ENCODE measurements at regions of chr2 and their contacts with region 1.

Region 1: DNA sequence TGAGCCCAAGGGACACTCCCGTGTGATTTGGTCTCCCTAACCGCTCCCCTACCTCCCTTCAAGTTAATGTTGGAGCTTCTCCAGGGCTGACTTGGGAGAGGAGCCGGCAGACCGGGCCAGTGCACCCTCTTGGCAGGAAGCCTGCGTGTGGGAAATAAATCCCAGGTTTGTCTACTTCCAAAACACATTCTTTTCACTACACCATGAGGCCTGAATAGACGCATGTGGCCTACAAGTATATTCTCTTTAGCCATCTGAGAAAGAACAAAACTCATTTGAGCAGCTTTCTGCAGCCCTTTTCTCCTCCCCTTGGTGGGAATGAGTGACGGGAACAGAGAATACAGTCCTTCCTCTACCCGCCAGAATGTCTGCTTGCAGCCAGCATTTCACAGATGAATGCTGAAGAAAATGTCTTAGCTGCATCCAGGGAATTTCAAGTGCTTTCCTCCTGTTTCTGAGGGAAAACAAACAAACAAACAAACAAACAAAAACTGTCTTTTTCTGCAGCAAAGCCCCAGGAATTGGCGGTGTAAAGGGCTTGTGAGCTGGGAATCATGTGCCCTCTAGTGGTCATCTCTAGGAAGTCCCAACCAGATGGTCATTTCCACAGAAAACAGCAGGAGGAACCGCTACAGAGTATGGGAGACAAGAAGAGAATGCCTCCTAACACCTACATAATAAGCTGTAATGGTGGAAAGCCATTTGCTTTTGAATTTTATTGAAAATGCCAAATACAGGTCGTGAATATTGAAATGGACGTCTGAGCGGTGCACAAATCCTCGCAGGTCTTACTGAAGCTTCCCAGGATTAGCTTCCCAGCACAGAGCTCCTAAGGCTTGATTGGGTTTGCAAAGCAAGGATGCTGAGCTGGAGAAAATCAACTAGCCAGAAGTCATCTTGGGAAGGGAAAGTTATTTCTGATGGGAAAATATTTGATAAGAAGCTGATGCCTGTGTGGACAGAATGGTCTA is 41.2 kb upstream of the DAPL1 start:
- DNase-seq: peak; percentile 70
- H3K4me3 Mint-ChIP-seq: no peak overlapping the region
- H3K27ac Mint-ChIP-seq: no peak overlapping the region
- H3K4me1 Mint-ChIP-seq: no peaks in the 10 kb centered on the region
- H3K27me3 Mint-ChIP-seq: peaks cover 29% of the 10 kb centered on the region
- CTCF ChIP-seq: peak; percentile 69

Region 2: DNA sequence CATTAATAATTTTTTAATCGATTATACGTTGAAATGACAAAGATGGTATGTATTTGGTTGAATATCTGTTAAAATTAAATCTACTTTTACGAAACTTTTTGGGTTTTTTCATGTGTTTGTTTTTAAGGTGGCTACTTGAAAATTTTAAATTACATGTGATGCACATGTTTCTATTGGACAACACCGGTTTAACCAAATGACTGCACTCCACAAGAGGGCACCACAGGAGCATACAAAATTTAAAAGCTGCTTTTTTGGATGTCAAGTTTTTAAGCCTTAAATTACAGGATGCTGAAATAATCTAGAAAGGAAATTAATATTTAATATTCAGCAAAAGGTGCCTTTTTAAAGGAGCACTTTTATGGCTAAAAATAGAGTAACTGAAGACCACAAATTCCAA is 976.5 kb before region 1 on chr2:
- CTCF ChIA-PET with region 1: interaction called, 7 read pairs
- POLR2A ChIA-PET with region 1: no interaction called
- intact Hi-C with region 1: loop called (anchors 10 kb)
- DNase-seq: peak; percentile 58
- H3K4me3 Mint-ChIP-seq: no peak overlapping the region
- H3K27ac Mint-ChIP-seq: no peak overlapping the region
- H3K4me1 Mint-ChIP-seq: no peaks in the 10 kb centered on the region
- H3K27me3 Mint-ChIP-seq: no peaks in the 10 kb centered on the region
- CTCF ChIP-seq: peak; percentile 54

Region 3: DNA sequence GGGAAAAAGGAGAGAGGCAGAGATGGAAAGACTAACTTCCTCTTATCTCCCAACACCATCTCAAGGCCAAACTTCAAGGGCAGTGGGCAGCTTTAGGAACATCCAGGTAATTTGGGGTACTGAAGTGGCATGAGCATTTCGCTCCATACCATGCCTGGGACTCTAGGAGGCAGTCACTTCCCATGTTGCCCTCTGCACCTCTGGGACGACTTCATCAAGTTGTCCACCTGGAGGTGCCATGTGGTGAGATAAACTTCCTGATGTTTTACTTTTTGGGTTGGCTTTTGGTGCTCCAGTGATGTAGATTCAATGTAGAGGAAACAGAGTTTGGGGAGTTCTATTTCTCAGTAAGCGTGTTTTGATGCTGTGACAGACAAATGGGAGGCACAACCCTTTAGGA is 708.6 kb before region 1 on chr2:
- CTCF ChIA-PET with region 1: interaction called, 22 read pairs
- POLR2A ChIA-PET with region 1: no interaction called
- intact Hi-C with region 1: no loop called
- DNase-seq: peak; percentile 15
- H3K4me3 Mint-ChIP-seq: no peak overlapping the region
- H3K27ac Mint-ChIP-seq: no peak overlapping the region
- H3K4me1 Mint-ChIP-seq: no peaks in the 10 kb centered on the region
- H3K27me3 Mint-ChIP-seq: no peaks in the 10 kb centered on the region
- CTCF ChIP-seq: no peak

Region 4: GRCh38 chr2:158456309-158457066 is 297.4 kb before region 1 on chr2 and contains the starts of genes CCDC148 and PKP4:
- CTCF ChIA-PET with region 1: interaction called, 16 read pairs
- POLR2A ChIA-PET with region 1: interaction called, 3 read pairs
- intact Hi-C with region 1: no loop called
- DNase-seq: peak; percentile 95
- H3K4me3 Mint-ChIP-seq: peak within 1 kb of the TSS; percentile 84
- H3K27ac Mint-ChIP-seq: peak within 1 kb of the TSS; percentile 94
- H3K4me1 Mint-ChIP-seq: peaks cover 15% of the 10 kb centered on the region
- H3K27me3 Mint-ChIP-seq: no peaks in the 10 kb centered on the region
- CTCF ChIP-seq: no peak
- total RNA-seq, gene CCDC148: 0.51 and 0.96 TPM in 2 replicates
- total RNA-seq, gene PKP4: 62.3 and 63.7 TPM in 2 replicates

Region 5: GRCh38 chr2:158686210-158686691 is 67.7 kb before region 1 on chr2:
- CTCF ChIA-PET with region 1: interaction called, 21 read pairs
- POLR2A ChIA-PET with region 1: no interaction called
- intact Hi-C with region 1: no loop called
- DNase-seq: no peak
- H3K4me3 Mint-ChIP-seq: no peak overlapping the region
- H3K27ac Mint-ChIP-seq: no peak overlapping the region
- H3K4me1 Mint-ChIP-seq: peaks cover 7% of the 10 kb centered on the region
- H3K27me3 Mint-ChIP-seq: no peaks in the 10 kb centered on the region
- CTCF ChIP-seq: no peak